Natural killer cell (primary cell): ENCODE measurements at regions of chr3 and their contacts with region 1.

Region 1: GRCh38 chr3:60017631-60018030 is 967.8 kb upstream of the CFAP20DC start:
- DNase-seq: peak; percentile 36 to 81
- ATAC-seq: peak; percentile 75 to 92 (median 91)
- H3K4me3 ChIP-seq: no peak overlapping the region
- H3K4me3 Mint-ChIP-seq: peak overlapping the region; percentile 65
- H3K27ac ChIP-seq: peak overlapping the region; percentile 70
- H3K27ac Mint-ChIP-seq: peak overlapping the region; percentile 83 to 89
- H3K4me1 ChIP-seq: peaks cover 21% of the 10 kb centered on the region
- H3K4me1 Mint-ChIP-seq: peaks cover 44 to 54% of the 10 kb centered on the region in 2 donors
- H3K27me3 ChIP-seq: no peaks in the 10 kb centered on the region
- H3K27me3 Mint-ChIP-seq: no peaks in the 10 kb centered on the region
- CTCF ChIP-seq: no peak

Region 2: DNA sequence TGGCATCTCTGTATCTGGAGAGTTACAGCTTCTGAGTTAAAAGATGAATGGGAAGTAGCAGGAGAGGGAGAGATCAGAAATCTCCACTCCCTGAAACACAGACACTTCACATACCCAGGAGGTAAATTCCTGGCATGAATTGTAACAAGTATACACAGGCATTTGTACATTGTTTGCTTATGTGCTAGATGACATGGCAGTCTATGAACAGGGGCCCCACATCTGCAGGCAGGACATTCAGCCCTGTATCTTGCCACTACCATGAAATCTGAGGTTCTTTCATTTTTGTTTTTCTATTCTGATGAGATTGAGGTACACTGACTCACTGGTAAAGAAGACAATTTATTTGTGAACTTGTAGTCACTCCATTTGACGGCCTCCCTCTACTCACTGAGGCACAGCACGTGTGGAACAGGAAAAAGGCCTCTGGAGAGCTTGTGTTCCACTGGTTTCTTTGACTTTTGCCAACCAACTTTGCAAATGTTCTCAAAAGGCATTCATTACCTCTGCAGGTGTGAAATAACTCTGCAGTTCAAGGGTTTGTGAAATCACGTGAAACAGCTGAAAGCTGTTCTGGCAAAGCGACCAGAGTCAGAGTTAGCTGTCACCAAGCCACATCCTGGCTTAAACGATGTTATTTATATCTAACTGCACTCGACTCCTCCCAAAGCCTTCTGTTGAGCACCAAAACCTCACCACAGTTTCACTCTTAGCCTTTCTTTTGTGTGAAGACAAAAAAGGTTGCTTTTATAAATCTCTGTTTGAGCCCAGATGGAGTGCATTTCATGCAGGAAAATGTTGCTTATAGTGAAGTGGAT is 566.5 kb before region 1 on chr3:
- intact Hi-C with region 1: loop called (anchors 5 kb)
- DNase-seq: peak; percentile 41 to 86
- ATAC-seq: peak; percentile 89 to 96 (median 93)
- H3K4me3 ChIP-seq: no peak overlapping the region
- H3K4me3 Mint-ChIP-seq: peak overlapping the region; percentile 81
- H3K27ac ChIP-seq: peak overlapping the region; percentile 73
- H3K27ac Mint-ChIP-seq: peak overlapping the region; percentile 88 to 95
- H3K4me1 ChIP-seq: peaks cover 30% of the 10 kb centered on the region
- H3K4me1 Mint-ChIP-seq: peaks cover 45 to 63% of the 10 kb centered on the region in 2 donors
- H3K27me3 ChIP-seq: no peaks in the 10 kb centered on the region
- H3K27me3 Mint-ChIP-seq: peaks cover 0 to 3% of the 10 kb centered on the region in 2 donors
- CTCF ChIP-seq: no peak

Region 3: DNA sequence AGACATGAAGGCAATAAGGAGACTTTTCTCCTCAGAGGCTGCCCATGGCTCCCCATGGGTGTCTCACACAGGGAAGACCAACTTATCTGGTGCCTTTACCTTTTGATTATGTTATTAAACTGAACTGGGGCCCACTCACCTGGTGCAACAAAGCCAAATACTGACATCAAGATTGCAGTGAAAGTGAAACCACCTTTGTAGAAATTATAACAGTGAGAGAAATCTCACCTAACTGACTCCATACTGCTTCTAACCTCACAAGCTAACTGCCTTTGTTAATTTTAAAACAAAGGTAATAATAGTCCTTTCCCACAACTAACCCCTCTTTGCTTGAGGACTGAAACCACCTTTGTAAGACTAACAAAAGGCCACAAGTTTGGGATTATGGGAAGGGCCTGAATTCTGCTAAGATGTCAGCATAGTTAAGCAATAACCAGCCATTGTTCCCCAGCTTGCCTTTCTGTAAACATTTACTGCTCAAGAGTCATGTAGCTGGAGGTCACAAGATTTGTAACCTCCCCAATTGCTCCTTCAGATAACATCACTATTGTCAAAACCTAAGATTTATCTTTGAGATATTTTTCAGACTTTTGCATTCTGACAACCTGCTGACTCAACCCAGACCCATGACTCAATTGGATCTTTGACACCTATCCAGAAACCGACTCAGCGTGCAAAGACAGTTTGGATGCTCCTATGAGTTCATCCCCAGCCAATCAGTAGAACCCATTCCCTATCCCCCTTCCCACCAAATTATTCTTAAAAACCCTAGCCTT is 547.5 kb before region 1 on chr3:
- intact Hi-C with region 1: no loop called
- DNase-seq: no peak
- ATAC-seq: peak in 2 of 3 donors; percentile 24 to 46
- H3K4me3 ChIP-seq: no peak overlapping the region
- H3K4me3 Mint-ChIP-seq: no peak overlapping the region
- H3K27ac ChIP-seq: no peak overlapping the region
- H3K27ac Mint-ChIP-seq: peak overlapping the region in 1 of 2 donors; percentile 67
- H3K4me1 ChIP-seq: peaks cover 2% of the 10 kb centered on the region
- H3K4me1 Mint-ChIP-seq: peaks cover 16 to 18% of the 10 kb centered on the region in 2 donors
- H3K27me3 ChIP-seq: no peaks in the 10 kb centered on the region
- H3K27me3 Mint-ChIP-seq: peaks cover 0 to 2% of the 10 kb centered on the region in 2 donors
- CTCF ChIP-seq: no peak

Region 4: DNA sequence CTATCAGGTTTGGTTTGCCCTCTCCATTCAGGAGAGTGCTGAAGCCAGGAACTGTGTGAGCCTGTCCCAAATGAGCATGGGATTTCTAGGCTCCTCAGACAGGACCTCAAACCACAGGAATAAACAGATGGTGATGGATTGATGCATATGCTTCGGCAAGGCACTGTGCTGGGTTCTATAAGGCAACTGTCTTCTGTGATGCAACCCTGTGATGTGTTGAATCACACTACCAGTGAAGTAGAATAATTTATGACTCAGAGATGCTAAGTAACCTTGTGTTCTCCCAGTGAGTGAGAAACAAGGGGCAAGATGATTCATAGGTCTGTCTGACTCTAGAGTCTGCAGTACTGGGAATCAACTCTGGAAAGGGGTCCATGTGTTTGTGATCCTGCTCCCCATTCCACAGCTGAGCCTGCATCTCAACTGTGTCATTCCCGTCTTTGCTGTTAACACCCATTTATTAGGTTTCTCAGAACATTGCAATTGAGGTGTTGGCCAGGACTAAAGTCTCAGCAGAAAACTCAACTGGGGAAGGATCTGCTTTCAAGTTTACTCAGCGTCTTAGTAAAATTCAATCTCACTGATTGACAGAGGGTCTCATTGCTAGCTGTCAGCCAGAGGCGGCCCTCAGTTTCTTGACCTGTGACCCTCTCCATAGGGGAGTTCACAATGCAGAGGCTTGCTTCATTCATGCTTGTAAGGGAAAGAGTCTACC is 457.8 kb before region 1 on chr3:
- intact Hi-C with region 1: no loop called
- DNase-seq: no peak
- ATAC-seq: no peak
- H3K4me3 ChIP-seq: no peak overlapping the region
- H3K4me3 Mint-ChIP-seq: no peak overlapping the region
- H3K27ac ChIP-seq: no peak overlapping the region
- H3K27ac Mint-ChIP-seq: no peak overlapping the region
- H3K4me1 ChIP-seq: no peaks in the 10 kb centered on the region
- H3K4me1 Mint-ChIP-seq: no peaks in the 10 kb centered on the region
- H3K27me3 ChIP-seq: no peaks in the 10 kb centered on the region
- H3K27me3 Mint-ChIP-seq: peaks cover 5 to 8% of the 10 kb centered on the region in 2 donors
- CTCF ChIP-seq: no peak

Region 5: DNA sequence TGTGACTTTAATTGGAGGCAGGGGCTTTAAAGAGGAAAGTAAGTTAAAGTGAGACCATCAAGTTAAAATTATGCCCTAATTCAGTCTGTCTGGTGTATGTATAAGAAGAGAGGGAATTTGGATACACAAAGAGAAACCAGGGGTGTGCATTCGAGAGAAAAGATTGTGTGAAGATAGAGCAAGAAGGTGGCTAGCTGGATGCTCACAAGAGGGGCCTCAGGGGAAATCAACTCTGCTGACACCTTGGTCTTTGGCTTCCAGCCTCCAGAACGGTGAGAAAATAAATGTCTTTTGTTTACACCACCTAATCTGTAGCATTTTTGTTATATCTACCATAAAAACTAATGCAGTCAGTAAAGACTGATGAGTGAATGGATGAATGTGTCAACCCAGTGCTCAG is 60.5 kb before region 1 on chr3:
- intact Hi-C with region 1: loop called (anchors 5 kb)
- DNase-seq: peak in 1 of 2 donors; percentile 16
- ATAC-seq: peak; percentile 74 to 98 (median 86)
- H3K4me3 ChIP-seq: no peak overlapping the region
- H3K4me3 Mint-ChIP-seq: peak overlapping the region; percentile 71
- H3K27ac ChIP-seq: peak overlapping the region; percentile 34
- H3K27ac Mint-ChIP-seq: peak overlapping the region; percentile 79 to 82
- H3K4me1 ChIP-seq: peaks cover 9% of the 10 kb centered on the region
- H3K4me1 Mint-ChIP-seq: peaks cover 31 to 51% of the 10 kb centered on the region in 2 donors
- H3K27me3 ChIP-seq: no peaks in the 10 kb centered on the region
- H3K27me3 Mint-ChIP-seq: peaks cover 0 to 7% of the 10 kb centered on the region in 2 donors
- CTCF ChIP-seq: no peak

Region 6: DNA sequence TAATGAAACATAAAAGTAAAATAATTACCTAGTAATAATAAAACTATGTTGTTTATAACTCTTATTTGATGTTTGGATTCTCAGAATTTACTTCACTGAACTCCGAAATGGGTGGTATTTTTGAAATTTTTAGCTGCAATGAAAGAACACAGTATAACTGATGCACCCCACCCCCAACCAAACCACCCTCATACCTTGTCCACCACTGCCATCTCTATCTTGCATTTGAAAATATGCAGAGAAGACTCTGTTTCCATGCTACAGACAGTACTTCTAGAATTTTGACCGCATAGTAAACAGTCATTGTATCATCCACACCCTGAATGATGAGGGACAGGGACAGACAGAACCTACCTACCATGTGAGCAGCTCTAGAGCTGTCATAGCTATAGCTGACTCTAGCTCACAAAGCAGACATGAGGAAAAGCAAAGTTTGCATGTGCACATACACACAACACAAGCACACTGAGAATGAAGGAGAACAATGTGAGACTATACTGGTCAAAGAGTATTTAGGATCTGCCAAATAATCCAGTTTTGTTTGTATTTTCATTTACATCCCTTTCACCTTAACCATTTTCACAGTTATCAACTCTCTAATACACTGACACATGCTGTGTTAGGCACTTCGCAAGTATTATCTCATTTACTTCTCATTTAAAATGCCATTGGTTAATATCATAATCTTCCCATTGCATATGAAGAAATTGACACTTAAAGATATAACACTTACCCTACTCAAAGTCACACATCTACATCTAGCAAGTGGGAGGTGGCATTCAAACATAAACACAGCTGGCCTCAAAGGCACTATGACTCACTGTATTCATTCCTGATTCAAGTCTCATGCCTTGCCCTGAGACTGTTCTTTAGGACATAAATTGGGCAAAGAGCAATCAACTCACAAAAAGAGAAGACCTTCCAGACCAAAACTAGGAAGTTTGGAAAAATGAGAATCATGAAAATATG is 46.9 kb after region 1 on chr3:
- intact Hi-C with region 1: loop called (anchors 1 kb)
- DNase-seq: peak in 1 of 2 donors; percentile 39
- ATAC-seq: peak; percentile 85 to 91 (median 88)
- H3K4me3 ChIP-seq: no peak overlapping the region
- H3K4me3 Mint-ChIP-seq: peak overlapping the region; percentile 60
- H3K27ac ChIP-seq: peak overlapping the region; percentile 24
- H3K27ac Mint-ChIP-seq: peak overlapping the region; percentile 73 to 91
- H3K4me1 ChIP-seq: peaks cover 10% of the 10 kb centered on the region
- H3K4me1 Mint-ChIP-seq: peaks cover 35 to 39% of the 10 kb centered on the region in 2 donors
- H3K27me3 ChIP-seq: no peaks in the 10 kb centered on the region
- H3K27me3 Mint-ChIP-seq: no peaks in the 10 kb centered on the region
- CTCF ChIP-seq: no peak